Psoas muscle (tissue), 8 donors: ENCODE measurements at regions of chr4 and their contacts with region 1.

Region 1: DNA sequence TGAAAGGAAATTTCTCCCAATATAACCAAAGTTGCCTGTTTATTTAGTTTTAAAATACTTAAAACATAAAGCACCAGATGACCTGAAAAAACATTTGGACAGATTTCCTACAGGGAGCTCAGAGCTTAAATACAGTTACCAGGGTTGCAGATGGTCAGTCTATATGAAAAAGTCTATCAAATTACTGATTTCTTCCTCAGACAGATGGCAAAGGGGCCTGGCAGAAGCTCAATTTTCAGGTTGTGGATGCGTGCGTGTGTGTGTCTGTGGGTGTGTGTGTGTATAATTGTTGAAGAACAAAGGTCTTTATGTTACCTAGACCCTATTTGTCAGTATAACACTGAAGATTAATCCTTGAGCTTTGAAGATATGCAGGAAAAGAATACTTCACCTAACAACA is 169.4 kb downstream of the MAD2L1 start:
- DNase-seq: no peak
- ATAC-seq: no peak
- H3K4me3 ChIP-seq: no peak overlapping the region
- H3K27ac ChIP-seq: no peak overlapping the region
- H3K4me1 ChIP-seq: no peaks in the 10 kb centered on the region
- H3K27me3 ChIP-seq: no peaks in the 10 kb centered on the region
- CTCF ChIP-seq: no peak

Region 2: DNA sequence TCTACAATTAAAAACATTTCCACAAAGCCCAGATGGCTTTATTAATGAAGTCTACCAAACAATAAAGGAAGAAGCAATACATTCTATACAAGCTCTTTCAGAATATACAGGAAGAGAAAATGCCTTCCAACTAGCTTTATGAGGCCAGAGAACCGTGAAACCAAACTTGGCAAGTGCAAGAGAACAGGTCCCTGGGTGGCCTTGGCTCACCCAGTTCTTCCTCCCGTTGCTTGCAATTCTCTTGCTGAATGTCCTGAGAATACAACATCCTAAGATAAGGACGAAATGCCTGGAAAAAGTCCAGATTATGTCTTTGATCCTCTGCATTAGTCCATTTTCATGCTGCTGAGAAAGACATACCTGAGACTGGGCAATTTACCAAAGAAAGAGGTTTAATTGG is 35.5 kb before region 1 on chr4:
- intact Hi-C with region 1: no loop called
- DNase-seq: no peak
- ATAC-seq: no peak
- H3K4me3 ChIP-seq: no peak overlapping the region
- H3K27ac ChIP-seq: no peak overlapping the region
- H3K4me1 ChIP-seq: no peaks in the 10 kb centered on the region
- H3K27me3 ChIP-seq: no peaks in the 10 kb centered on the region
- CTCF ChIP-seq: no peak

Region 3: DNA sequence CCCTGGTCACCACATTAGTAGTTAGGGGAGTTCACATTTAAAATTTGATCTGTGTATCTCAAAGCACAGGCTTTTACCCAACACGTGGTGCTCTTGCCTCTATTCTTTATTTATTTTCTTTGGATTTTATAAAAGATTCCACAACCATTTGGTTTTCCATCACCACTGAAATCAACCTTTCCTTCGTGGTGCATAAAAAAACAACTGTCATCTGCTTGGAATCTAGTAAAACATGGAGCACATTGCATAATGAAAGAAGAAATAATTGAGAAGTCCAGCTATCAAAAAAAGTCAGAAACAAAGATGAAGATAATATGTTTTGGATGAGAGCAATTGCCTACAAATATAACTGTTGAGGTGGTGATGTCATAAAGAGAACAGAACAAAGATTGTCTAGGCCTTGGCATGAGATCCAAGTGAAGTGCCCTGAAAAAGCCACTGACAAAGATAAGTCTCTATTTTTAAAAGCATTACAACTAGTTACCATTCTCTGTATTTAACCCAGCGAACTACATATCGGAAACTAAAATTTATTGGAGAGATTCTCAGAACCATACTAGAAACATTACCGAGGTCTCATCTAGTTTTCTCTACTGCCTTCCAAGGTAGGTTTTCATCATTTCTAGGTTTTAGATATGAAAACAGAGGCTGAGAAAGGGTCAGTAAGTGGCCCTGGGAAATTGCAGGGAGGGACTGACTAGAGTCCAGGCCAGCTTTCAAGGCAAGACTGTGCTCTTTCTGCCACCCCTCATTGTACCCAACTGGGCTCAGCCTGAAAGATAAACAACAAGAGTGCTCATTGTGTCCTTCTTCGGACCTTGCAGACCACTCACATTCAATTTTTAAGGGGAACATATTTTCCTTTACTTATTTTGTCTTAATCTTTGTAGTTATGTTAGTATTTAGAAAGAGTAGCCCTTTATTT is 42.1 kb after region 1 on chr4:
- intact Hi-C with region 1: no loop called
- DNase-seq: no peak
- ATAC-seq: no peak
- H3K4me3 ChIP-seq: no peak overlapping the region
- H3K27ac ChIP-seq: no peak overlapping the region
- H3K4me1 ChIP-seq: no peaks in the 10 kb centered on the region
- H3K27me3 ChIP-seq: no peaks in the 10 kb centered on the region
- CTCF ChIP-seq: no peak

Region 4: DNA sequence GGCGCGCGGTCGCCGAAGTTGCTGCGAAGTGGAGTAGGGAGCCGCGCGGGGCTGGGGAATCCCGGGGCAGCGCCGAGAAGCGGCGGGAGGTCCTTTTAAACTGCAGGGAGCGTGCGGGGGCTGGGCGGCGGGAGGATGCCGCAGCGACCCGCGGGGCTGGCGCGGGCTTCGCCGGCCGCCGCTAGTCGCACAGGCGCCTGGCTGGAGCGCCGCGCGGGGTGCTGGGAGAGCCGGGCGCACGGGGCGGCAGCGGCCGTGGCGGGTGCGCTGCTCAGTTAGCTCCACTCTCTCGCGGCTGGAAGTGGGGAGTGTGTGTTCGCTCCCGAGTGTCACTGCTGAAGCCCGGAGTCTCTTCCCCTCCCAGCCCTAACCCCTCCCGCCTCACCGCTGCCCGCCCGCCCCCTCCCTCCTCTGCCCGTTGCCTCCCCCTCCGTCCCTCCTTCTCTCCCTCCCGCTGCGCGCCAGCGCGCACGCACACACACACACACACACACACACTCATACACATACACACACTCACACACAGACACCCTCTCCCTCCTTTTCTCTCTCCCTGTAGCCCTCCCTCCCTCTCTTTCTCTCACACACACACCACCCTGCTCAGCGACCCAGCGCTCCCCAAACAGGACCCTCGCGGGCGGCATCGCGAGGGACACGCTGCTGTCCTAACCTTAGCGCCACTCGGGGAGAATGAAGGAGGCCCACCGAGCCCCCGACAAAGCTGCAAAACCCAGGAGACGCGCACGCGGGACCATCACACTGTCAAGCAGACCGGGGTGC is 1175.2 kb after region 1 on chr4 and contains the start of gene NDNF:
- intact Hi-C with region 1: loop called in 1 of 2 experiments (anchors 10 kb)
- DNase-seq: peak; percentile 29 to 71
- ATAC-seq: peak; percentile 58 to 78 (median 72)
- H3K4me3 ChIP-seq: peak within 1 kb of the TSS; percentile 69
- H3K27ac ChIP-seq: peak within 1 kb of the TSS; percentile 34
- H3K4me1 ChIP-seq: peaks cover 7% of the 10 kb centered on the region
- H3K27me3 ChIP-seq: peaks cover 0 to 35% (median 4%) of the 10 kb centered on the region in 3 donors
- CTCF ChIP-seq: no peak
- total RNA-seq, gene NDNF: 2.1 to 7.6 (median 5.5) TPM